ENCODE measurements at regions of chrX and their contacts with region 1.

Region 1: DNA sequence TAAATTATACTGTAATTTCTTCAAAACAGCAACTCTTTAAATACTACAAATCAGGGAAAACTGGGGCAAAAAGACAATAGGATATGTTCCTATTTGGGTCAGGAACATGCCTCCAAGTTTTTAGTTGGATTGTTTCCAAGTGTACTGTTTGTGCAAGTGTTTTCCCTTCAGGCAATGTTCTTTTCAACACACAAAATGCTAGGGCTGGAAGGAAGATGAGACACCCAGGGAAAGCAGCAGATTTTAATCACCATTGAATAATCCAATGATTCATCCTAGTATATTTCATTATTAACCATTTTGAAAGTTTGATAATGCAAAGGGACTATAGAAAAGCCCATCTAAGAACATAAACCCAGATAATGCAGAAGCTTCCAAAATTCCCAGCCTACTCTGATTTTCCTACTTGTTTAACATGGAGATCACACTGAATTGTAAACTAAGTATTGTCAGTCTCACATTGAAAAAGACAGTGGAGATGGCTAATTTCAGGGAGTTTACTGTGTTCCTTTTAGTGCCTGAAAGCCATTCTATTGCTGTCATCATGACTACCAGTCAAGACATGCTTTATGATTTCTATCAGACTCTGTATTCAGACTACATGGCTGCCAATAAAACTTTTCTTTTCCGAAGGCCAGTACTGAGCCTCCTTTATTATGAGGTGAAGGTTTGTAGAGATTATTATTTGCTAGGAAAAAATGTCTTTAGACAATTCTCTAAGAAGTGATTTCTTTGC is 38.6 kb downstream of the COL4A6 start:
- DNase-seq: no peak
- H3K4me3 Mint-ChIP-seq: no peak overlapping the region
- H3K27ac Mint-ChIP-seq: no peak overlapping the region
- H3K4me1 Mint-ChIP-seq: peaks cover 35% of the 10 kb centered on the region
- H3K27me3 Mint-ChIP-seq: no peaks in the 10 kb centered on the region
- CTCF ChIP-seq: no peak

Region 2: GRCh38 chrX:108439961-108440696 is 40.5 kb after region 1 on chrX:
- CTCF ChIA-PET with region 1: no interaction called
- intact Hi-C with region 1: loop called (anchors 5 kb)
- DNase-seq: peak; percentile 9
- H3K4me3 Mint-ChIP-seq: peak overlapping the region; percentile 88
- H3K27ac Mint-ChIP-seq: peak overlapping the region; percentile 86
- H3K4me1 Mint-ChIP-seq: peaks cover 8% of the 10 kb centered on the region
- H3K27me3 Mint-ChIP-seq: no peaks in the 10 kb centered on the region
- CTCF ChIP-seq: no peak

Region 3: DNA sequence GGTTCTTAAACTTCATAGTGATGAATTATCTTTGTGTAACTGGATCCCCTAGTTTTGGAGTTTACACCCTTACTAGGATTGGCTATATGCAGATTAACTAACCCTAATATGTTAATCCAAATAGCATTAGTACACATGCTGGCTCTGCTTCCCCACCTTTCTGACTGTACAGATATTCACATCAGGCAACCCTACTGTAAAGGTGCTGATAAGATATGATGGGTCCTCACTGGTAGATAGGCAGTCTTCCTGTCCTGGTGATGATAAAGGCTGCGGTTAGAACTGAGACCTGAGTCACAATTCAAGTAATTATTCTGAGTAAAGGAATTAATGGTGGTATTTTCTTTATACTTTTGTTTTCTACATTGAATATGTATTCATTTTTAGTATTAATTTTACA is 158.6 kb after region 1 on chrX:
- CTCF ChIA-PET with region 1: no interaction called
- intact Hi-C with region 1: no loop called
- DNase-seq: no peak
- H3K4me3 Mint-ChIP-seq: no peak overlapping the region
- H3K27ac Mint-ChIP-seq: no peak overlapping the region
- H3K4me1 Mint-ChIP-seq: no peaks in the 10 kb centered on the region
- H3K27me3 Mint-ChIP-seq: no peaks in the 10 kb centered on the region
- CTCF ChIP-seq: no peak

Region 4: GRCh38 chrX:108610141-108610540 is 210.5 kb after region 1 on chrX:
- CTCF ChIA-PET with region 1: no interaction called
- intact Hi-C with region 1: no loop called
- DNase-seq: no peak
- H3K4me3 Mint-ChIP-seq: no peak overlapping the region
- H3K27ac Mint-ChIP-seq: no peak overlapping the region
- H3K4me1 Mint-ChIP-seq: no peaks in the 10 kb centered on the region
- H3K27me3 Mint-ChIP-seq: no peaks in the 10 kb centered on the region
- CTCF ChIP-seq: no peak

Region 5: GRCh38 chrX:108671524-108671923 is 271.9 kb after region 1 on chrX:
- CTCF ChIA-PET with region 1: no interaction called
- intact Hi-C with region 1: no loop called
- DNase-seq: no peak
- H3K4me3 Mint-ChIP-seq: no peak overlapping the region
- H3K27ac Mint-ChIP-seq: no peak overlapping the region
- H3K4me1 Mint-ChIP-seq: peaks cover 9% of the 10 kb centered on the region
- H3K27me3 Mint-ChIP-seq: no peaks in the 10 kb centered on the region
- CTCF ChIP-seq: no peak